Sigmoid colon (tissue), 7 donors: ENCODE measurements at regions of chr3 and their contacts with region 1.

Region 1: DNA sequence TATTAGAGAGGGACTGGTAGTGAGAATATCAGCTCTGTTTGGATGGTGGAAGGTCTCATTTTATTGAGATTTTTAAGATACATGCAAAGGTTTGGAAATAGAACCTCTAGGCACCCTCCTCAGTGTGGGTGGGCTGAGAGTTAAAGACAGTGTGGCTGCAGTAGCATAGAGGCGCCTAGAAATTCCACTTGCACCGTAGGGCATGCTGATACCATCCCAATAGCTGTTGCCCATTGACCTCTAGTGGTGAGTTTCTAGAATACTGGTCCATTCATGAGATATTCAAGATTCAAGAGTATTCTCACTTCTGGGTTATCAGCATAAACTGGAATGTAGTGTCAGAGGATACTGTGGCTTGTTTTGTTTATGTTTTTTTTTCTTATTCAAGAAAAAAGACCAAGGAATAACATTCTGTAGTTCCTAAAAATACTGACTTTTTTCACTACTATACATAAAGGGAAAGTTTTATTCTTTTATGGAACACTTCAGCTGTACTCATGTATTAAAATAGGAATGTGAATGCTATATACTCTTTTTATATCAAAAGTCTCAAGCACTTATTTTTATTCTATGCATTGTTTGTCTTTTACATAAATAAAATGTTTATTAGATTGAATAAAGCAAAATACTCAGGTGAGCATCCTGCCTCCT is 87.2 kb downstream of the TGFBR2 start:
- DNase-seq: peak; percentile 72
- H3K4me3 ChIP-seq: no peak overlapping the region
- H3K27ac ChIP-seq: peak overlapping the region; percentile 72 to 83 (median 75)
- H3K4me1 ChIP-seq: peaks cover 0 to 74% (median 62%) of the 10 kb centered on the region in 4 donors
- H3K27me3 ChIP-seq: no peaks in the 10 kb centered on the region
- CTCF ChIP-seq: peak; percentile 79 to 88 (median 82)
- EP300 ChIP-seq: no peak
- POLR2A ChIP-seq: no peak

Region 2: DNA sequence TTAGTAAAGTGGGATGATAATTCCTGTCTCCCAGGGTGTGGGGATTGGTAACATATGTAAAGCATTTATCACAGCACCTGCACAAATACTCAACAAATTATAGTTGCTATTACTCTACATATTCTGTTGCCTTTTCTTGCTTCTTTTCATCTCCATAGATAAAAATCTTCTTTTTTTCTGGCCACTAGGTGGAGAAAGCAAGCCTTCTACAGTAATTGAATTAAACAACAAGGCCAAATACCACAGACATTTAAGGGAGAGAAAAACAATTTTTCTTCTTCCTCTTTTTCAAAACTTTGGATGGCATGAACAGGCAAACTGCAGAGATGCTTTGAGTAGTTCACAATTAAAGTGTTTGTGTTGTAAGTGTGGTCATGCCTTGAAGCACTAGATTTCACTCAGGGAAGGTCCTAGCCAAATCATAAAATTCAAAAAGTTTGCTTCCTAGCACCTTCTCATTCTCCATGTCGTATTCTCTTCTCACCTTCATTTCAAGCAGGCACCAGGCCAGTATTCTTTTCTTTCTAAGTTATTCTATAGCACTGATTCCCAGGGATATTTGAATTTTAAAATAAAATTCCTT is 580.6 kb before region 1 on chr3:
- intact Hi-C with region 1: loop called (anchors 2 kb)
- DNase-seq: no peak
- H3K4me3 ChIP-seq: no peak overlapping the region
- H3K27ac ChIP-seq: no peak overlapping the region
- H3K4me1 ChIP-seq: peaks cover 0 to 11% (median 8%) of the 10 kb centered on the region in 4 donors
- H3K27me3 ChIP-seq: no peaks in the 10 kb centered on the region
- CTCF ChIP-seq: peak; percentile 53 to 75 (median 63)
- EP300 ChIP-seq: no peak
- POLR2A ChIP-seq: no peak

Region 3: GRCh38 chr3:30437171-30437601 is 256.4 kb before region 1 on chr3:
- intact Hi-C with region 1: loop called (anchors 5 kb)
- DNase-seq: peak; percentile 79
- H3K4me3 ChIP-seq: no peak overlapping the region
- H3K27ac ChIP-seq: peak overlapping the region; percentile 74 to 89 (median 82)
- H3K4me1 ChIP-seq: peaks cover 0 to 66% (median 53%) of the 10 kb centered on the region in 4 donors
- H3K27me3 ChIP-seq: no peaks in the 10 kb centered on the region
- CTCF ChIP-seq: peak in 1 of 4 experiments; percentile 11
- EP300 ChIP-seq: no peak
- POLR2A ChIP-seq: no peak

Region 4: DNA sequence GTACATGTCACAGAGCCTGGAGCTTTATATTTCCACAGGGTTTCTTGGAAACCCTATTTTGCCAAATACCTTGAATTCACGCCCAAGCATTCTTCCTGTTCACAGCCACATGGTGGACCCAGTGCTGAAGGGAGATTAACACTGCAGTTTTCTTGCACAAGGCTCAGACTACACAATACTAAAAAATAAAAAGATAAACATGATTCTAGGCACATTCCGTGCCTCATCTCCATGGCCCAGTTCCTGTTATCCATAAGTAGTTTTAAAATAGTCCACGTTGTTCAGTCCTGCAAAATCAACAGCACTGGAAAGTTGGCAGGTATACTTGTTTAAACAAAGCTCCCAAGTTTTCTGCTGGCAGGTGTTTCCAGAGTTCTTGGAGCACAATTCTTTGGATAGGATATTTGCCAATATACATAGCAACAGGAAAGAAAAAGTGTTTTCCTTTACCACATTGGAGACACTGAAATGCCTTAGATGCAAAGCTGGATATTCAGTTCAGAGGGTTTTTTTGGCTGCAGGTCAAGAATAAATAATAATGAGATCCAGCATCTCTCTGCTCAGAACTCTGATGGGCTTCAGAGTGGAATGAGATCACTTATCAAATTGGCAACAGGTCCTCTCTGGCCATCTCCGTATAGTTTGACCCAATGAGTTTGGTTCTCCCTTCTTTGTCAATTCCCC is 175.3 kb before region 1 on chr3:
- intact Hi-C with region 1: loop called (anchors 2 kb)
- DNase-seq: peak; percentile 88
- H3K4me3 ChIP-seq: no peak overlapping the region
- H3K27ac ChIP-seq: peak overlapping the region; percentile 74 to 85 (median 82)
- H3K4me1 ChIP-seq: peaks cover 0 to 69% (median 41%) of the 10 kb centered on the region in 4 donors
- H3K27me3 ChIP-seq: no peaks in the 10 kb centered on the region
- CTCF ChIP-seq: no peak
- EP300 ChIP-seq: peak; percentile 84 to 97 (median 91)
- POLR2A ChIP-seq: no peak